Heart right ventricle (tissue), 16 donors: ENCODE measurements at regions of chr4 and their contacts with region 1.

Region 1: GRCh38 chr4:164815711-164816110 is 61.3 kb upstream of the APELA start:
- DNase-seq: no peak
- ATAC-seq: no peak
- H3K4me3 ChIP-seq: no peak overlapping the region
- H3K27ac ChIP-seq: no peak overlapping the region
- H3K4me1 ChIP-seq: no peaks in the 10 kb centered on the region
- H3K27me3 ChIP-seq: no peaks in the 10 kb centered on the region
- CTCF ChIP-seq: no peak

Region 2: GRCh38 chr4:166546009-166546408 is 1730.3 kb after region 1 on chr4:
- intact Hi-C with region 1: loop called in 1 of 10 experiments (anchors 5 kb)
- DNase-seq: no peak
- ATAC-seq: no peak
- H3K4me3 ChIP-seq: no peak overlapping the region
- H3K27ac ChIP-seq: no peak overlapping the region
- H3K4me1 ChIP-seq: no peaks in the 10 kb centered on the region
- H3K27me3 ChIP-seq: no peaks in the 10 kb centered on the region
- CTCF ChIP-seq: no peak